Left lung (tissue), 14 donors: ENCODE measurements at regions of chr7 and their contacts with region 1.

Region 1: DNA sequence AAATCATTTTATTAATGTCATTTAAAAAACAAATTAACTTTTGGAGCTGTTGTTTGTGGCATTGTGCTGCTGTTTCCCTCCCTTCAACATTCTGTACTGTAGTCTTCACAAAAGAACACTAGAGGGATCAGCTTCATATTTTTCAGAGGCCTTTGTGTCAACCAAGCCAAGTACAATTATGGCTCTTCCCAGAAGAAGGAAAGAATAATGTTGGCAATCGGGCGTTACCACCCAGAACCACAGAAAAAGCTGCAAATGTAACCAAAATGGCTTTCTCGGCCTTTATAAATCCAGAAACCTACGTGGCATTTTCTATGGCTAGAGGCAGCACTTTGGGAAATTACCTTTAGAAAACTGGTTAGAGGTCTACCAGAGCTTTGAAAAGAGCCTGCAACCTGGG is 98.8 kb upstream of the COL1A2 start:
- DNase-seq: peak in 2 of 4 donors; percentile 63 to 82
- ATAC-seq: peak; percentile 62
- H3K4me3 ChIP-seq: no peak overlapping the region
- H3K27ac ChIP-seq: peak overlapping the region in 1 of 2 donors; percentile 83
- H3K4me1 ChIP-seq: peaks cover 0 to 6% of the 10 kb centered on the region in 2 donors
- H3K27me3 ChIP-seq: peaks cover 0 to 4% of the 10 kb centered on the region in 2 donors
- CTCF ChIP-seq: peak; percentile 14 to 24

Region 2: DNA sequence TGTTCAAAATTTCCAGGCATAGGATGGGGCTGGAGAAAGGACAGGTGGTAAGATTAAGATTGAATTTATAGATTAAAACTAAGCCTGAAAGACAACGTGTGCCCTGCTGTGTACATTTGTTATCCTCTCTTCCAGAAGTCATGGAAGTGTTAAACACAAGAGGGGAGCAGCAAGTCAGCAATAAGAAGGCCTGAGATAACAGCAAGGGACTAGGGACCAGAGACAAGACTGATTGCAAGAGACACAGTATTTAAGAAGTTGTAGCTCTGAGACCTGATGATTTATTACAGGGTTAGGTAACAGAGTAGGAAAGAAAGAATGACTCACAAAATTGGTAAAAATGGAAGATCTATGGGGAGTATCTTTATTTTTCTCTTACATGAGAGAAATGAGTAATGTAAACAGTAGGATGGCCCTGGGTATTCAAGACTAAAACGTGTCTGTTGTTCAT is 43.1 kb after region 1 on chr7:
- intact Hi-C with region 1: no loop called
- DNase-seq: no peak
- ATAC-seq: no peak
- H3K4me3 ChIP-seq: no peak overlapping the region
- H3K27ac ChIP-seq: no peak overlapping the region
- H3K4me1 ChIP-seq: no peaks in the 10 kb centered on the region
- H3K27me3 ChIP-seq: no peaks in the 10 kb centered on the region
- CTCF ChIP-seq: no peak

Region 3: DNA sequence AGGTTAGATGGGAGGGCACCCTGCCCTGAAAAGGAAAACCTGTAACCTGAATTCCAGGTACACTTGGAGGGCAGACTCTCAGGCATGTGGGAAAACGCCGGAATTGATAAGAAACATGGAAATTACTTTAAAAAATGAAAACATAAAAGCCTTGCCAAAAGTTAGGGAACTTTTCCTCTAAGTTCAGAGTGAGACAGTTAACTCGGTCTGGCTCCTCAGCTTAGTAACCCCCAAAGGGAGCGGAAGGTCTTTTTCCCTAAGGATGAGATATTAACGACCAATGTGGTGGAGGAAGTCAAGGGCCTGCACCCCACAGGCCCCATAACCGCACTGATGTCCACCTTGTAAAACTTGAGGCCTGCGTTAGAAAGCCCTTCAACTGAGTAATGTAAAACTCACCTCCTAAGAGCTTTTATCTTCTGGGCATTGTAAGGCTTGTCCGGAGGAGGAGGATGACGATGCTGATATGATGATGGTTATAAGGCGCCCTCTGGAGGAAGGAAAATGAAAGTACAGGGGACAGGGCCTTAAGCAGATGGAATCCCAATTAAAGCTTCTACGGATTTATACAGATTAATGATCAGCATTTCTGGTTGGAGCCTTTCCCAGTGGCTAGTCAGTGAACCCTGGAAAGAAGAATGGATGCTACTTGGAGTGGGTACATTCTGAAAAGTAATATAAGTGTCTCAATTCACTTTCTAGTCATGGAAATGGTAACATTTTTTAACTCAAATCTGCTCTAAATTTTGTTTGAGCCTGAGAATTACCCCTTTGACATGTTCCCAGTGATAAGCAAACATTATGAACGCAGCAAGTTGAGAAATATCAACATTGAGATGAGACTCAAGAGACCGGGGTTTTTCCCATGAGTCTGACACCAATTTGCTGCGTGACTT is 99.5 kb after region 1 on chr7:
- intact Hi-C with region 1: loop called in 1 of 2 experiments (anchors 5 kb)
- DNase-seq: peak in 2 of 4 donors; percentile 85 to 91
- ATAC-seq: peak; percentile 80
- H3K4me3 ChIP-seq: peak overlapping the region; percentile 31 to 38
- H3K27ac ChIP-seq: peak overlapping the region; percentile 63 to 91
- H3K4me1 ChIP-seq: peaks cover 0 to 4% of the 10 kb centered on the region in 2 donors
- H3K27me3 ChIP-seq: peaks cover 0 to 28% of the 10 kb centered on the region in 2 donors
- CTCF ChIP-seq: peak; percentile 56 to 67

Region 4: DNA sequence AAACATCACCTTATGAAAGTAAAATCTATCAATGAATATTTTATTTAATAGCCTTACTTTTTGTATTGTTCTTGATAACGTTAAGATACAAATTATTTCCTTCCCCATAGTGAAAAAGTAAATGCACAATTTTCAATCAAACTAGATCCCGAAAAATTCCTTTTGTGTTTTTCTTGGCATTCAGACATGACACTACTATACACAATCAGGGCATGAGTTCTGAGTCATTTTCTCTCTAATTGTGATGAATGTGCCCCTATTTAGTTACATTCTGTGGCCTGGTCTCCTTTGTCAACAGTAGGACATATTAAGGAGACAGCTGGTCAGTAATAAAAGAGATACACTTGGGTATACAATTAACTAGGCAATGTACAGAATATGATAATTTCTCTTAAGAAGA is 118.6 kb after region 1 on chr7:
- intact Hi-C with region 1: loop called in 1 of 2 experiments (anchors 10 kb)
- DNase-seq: no peak
- ATAC-seq: no peak
- H3K4me3 ChIP-seq: no peak overlapping the region
- H3K27ac ChIP-seq: peak overlapping the region in 1 of 2 donors; percentile 60
- H3K4me1 ChIP-seq: peaks cover 0 to 7% of the 10 kb centered on the region in 2 donors
- H3K27me3 ChIP-seq: no peaks in the 10 kb centered on the region
- CTCF ChIP-seq: no peak